ENCODE measurements at regions of chr1 and their contacts with region 1.

Region 1: GRCh38 chr1:227563324-227564201 is at the start of gene ZNF678:
- DNase-seq: peak; percentile 84 to 89 (median 86)
- H3K4me3 ChIP-seq: peak within 1 kb of the TSS; percentile 39 to 74
- H3K4me3 Mint-ChIP-seq: peak within 1 kb of the TSS; percentile 90 to 97 (median 93)
- H3K27ac ChIP-seq: peak within 1 kb of the TSS; percentile 68
- H3K27ac Mint-ChIP-seq: peak within 1 kb of the TSS; percentile 89 to 96 (median 95)
- H3K4me1 ChIP-seq: peaks cover 7% of the 10 kb centered on the region
- H3K4me1 Mint-ChIP-seq: peaks cover 24 to 30% (median 27%) of the 10 kb centered on the region in 4 donors
- H3K27me3 ChIP-seq: no peaks in the 10 kb centered on the region
- H3K27me3 Mint-ChIP-seq: peaks cover 20 to 28% of the 10 kb centered on the region in 2 donors
- total RNA-seq, gene ZNF678: 8.4 to 10.2 TPM

Region 2: DNA sequence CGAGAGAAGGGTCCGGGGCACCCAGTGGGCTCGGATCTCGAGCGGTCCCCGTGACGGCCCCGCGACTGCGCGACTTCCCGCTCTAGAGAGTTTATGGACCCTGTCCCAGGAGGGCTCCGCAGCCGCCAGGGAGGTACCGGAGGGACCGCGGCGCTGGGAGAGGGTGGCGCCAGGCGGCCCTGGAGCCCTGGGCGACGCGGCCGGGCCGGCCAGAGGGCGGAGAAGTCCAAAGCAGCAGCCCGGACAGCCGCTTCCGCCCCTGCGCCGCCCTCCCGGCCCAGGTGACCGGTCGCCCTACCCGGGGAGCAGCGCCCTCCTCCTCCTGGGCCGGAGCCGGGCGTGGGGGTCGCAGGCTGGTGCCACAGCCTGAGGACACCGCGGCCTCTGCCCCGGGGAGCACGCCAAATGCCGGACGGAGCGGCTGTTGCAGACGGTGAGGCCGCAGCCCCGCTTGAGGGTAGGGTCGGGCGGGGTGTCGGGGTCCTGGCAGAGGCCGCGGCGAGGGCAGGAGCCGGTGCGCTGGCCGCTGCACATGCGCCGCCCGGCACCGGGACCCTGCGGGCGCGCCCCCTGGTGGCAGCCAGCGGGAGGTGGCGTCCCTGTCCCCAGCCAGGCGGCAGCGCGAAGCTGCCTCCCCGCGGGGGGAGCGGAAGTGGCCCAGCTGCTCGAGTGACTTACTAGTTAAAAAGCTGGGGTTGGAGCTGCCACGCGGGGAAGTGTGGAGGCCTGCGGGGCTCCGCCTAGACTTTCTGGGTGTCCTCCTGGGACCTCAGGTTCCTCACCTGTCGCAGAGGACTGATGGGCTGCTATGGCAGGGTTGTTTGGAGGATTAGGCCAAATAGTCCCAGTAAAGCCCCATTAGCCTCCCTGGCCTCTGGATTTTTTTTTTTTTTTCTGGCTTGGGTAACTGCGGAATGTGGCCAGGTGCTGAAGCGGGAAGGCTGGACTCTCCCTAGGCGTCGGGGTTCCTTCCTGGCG is 21.1 kb before region 1 on chr1:
- CTCF ChIA-PET with region 1: interaction called, 38 read pairs
- POLR2A ChIA-PET with region 1: interaction called, 8 read pairs
- intact Hi-C with region 1: loop called (anchors 1 kb)
- DNase-seq: peak; percentile 86 to 90 (median 87)
- H3K4me3 ChIP-seq: peak overlapping the region in 1 of 2 donors; percentile 52
- H3K4me3 Mint-ChIP-seq: peak overlapping the region; percentile 59 to 73 (median 70)
- H3K27ac ChIP-seq: no peak overlapping the region
- H3K27ac Mint-ChIP-seq: peak overlapping the region; percentile 17 to 83 (median 57)
- H3K4me1 ChIP-seq: peaks cover 9% of the 10 kb centered on the region
- H3K4me1 Mint-ChIP-seq: peaks cover 3 to 6% (median 4%) of the 10 kb centered on the region in 4 donors
- H3K27me3 ChIP-seq: no peaks in the 10 kb centered on the region
- H3K27me3 Mint-ChIP-seq: peaks cover 0 to 4% of the 10 kb centered on the region in 2 donors

Region 3: DNA sequence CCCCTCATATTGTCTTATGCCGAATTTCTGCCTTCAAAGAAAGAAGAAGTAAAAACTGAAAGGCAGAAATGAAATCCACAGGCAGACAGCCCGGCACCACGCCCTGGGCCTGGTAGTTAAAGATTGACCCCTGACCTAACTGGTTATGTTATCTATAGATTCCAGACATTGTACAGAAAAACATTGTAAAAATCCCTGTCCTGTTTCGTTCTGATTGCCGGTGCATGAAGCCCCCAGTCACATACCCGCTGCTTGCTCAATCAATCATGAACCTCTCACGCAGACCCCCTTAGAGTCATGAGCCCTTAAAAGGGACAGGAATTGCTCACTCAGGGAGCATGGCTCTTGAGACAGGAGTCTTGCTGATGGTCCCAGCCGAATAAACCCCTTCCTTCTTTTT is 122.2 kb after region 1 on chr1:
- CTCF ChIA-PET with region 1: no interaction called
- POLR2A ChIA-PET with region 1: no interaction called
- intact Hi-C with region 1: no loop called
- DNase-seq: no peak
- H3K4me3 ChIP-seq: no peak overlapping the region
- H3K4me3 Mint-ChIP-seq: no peak overlapping the region
- H3K27ac ChIP-seq: no peak overlapping the region
- H3K27ac Mint-ChIP-seq: no peak overlapping the region
- H3K4me1 ChIP-seq: no peaks in the 10 kb centered on the region
- H3K4me1 Mint-ChIP-seq: no peaks in the 10 kb centered on the region
- H3K27me3 ChIP-seq: no peaks in the 10 kb centered on the region
- H3K27me3 Mint-ChIP-seq: no peaks in the 10 kb centered on the region

Region 4: GRCh38 chr1:227734856-227735538 is 171.4 kb after region 1 on chr1 and contains the starts of genes JMJD4 and SNAP47:
- CTCF ChIA-PET with region 1: no interaction called
- POLR2A ChIA-PET with region 1: interaction called, 4 read pairs
- intact Hi-C with region 1: loop called (anchors 1 kb)
- DNase-seq: peak; percentile 88 to 97 (median 93)
- H3K4me3 ChIP-seq: peak within 1 kb of the TSS; percentile 69 to 80
- H3K4me3 Mint-ChIP-seq: peak within 1 kb of the TSS; percentile 89 to 93 (median 90)
- H3K27ac ChIP-seq: peak within 1 kb of the TSS; percentile 84
- H3K27ac Mint-ChIP-seq: peak within 1 kb of the TSS; percentile 88 to 94 (median 90)
- H3K4me1 ChIP-seq: peaks cover 39% of the 10 kb centered on the region
- H3K4me1 Mint-ChIP-seq: peaks cover 26 to 65% (median 39%) of the 10 kb centered on the region in 4 donors
- H3K27me3 ChIP-seq: no peaks in the 10 kb centered on the region
- H3K27me3 Mint-ChIP-seq: peaks cover 0 to 1% of the 10 kb centered on the region in 2 donors
- total RNA-seq, gene JMJD4: 32.4 to 34.1 TPM
- total RNA-seq, gene SNAP47: 27.0 to 30.5 TPM